ENCODE measurements at regions of chr15 and their contacts with region 1.

Region 1: DNA sequence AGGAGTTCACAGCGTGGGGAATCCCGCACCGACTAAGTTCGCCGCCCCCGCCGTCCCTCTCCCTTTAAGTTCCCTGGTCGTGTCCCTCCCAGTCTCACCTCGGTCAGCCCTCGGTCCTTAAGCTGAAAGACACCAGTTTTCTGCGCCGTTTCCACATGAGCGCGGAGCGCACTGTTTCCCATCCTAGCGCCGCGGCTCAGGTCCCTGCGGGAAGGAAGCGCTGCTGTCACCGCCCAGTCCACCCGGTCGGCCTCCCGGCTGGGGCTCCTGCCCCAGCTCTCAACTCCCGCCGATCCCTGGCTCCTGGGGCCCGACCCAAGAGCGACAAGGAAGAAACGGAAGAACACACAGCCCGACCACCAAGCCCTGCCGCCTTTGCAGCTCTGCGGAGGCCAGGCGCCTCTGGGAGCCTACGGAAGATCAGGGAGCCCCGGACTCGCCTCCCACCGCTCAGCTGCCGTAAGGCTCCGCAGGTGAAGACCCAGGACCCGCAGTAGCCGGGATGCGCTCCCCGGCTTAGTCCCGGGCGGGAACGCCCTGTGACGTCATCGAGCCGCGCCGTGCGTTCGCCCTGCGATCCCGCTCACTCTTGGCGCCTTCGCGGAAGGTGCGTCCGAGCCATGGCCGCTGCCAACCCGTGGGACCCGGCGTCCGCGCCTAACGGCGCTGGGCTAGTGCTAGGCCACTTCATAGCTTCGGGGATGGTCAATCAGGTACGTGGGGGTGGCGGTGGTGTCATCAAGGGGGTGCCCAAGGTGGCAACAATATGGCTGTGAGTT is at the starts of genes HAUS2 and LRRC57:
- DNase-seq: peak; percentile 89
- H3K4me3 Mint-ChIP-seq: peak within 1 kb of the TSS; percentile 90
- H3K27ac Mint-ChIP-seq: peak within 1 kb of the TSS; percentile 87
- H3K4me1 Mint-ChIP-seq: peaks cover 60% of the 10 kb centered on the region
- H3K27me3 Mint-ChIP-seq: no peaks in the 10 kb centered on the region
- total RNA-seq, gene HAUS2: 35.1 to 35.8 TPM
- total RNA-seq, gene LRRC57: 21.2 to 23.5 TPM

Region 2: GRCh38 chr15:42495361-42496212 is 52.9 kb before region 1 on chr15 and contains the start of gene SNAP23:
- CTCF ChIA-PET with region 1: interaction called, 5 read pairs
- POLR2A ChIA-PET with region 1: interaction called, 36 read pairs
- DNase-seq: peak; percentile 87
- H3K4me3 Mint-ChIP-seq: peak within 1 kb of the TSS; percentile 98
- H3K27ac Mint-ChIP-seq: peak within 1 kb of the TSS; percentile 84
- H3K4me1 Mint-ChIP-seq: peaks cover 64% of the 10 kb centered on the region
- H3K27me3 Mint-ChIP-seq: no peaks in the 10 kb centered on the region
- total RNA-seq, gene SNAP23: 46.0 to 49.1 TPM

Region 3: DNA sequence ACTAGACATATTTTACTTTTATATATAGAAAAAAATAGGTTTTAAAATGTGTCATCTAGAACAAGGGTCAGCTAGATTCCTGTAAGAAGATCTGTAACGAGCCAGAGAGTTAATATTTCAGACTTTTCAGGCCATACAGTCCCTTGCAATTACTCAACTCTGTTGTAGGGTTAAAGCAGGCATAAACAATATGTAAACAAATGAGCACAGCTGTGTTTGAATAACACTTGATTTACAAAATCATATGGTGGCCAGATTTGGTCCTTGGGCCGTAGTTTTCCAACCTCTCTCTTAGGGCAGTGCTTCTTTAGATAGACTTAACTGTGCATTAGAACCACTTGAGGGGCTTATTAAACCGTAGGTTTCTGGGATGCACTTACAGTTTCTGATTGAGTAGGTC is 19.5 kb before region 1 on chr15:
- CTCF ChIA-PET with region 1: interaction called, 3 read pairs
- POLR2A ChIA-PET with region 1: interaction called, 27 read pairs
- DNase-seq: no peak
- H3K4me3 Mint-ChIP-seq: no peak overlapping the region
- H3K27ac Mint-ChIP-seq: no peak overlapping the region
- H3K4me1 Mint-ChIP-seq: peaks cover 2% of the 10 kb centered on the region
- H3K27me3 Mint-ChIP-seq: no peaks in the 10 kb centered on the region

Region 4: GRCh38 chr15:42558739-42559138 is 10.3 kb after region 1 on chr15:
- CTCF ChIA-PET with region 1: interaction called, 6 read pairs
- POLR2A ChIA-PET with region 1: interaction called, 13 read pairs
- DNase-seq: no peak
- H3K4me3 Mint-ChIP-seq: no peak overlapping the region
- H3K27ac Mint-ChIP-seq: no peak overlapping the region
- H3K4me1 Mint-ChIP-seq: peaks cover 8% of the 10 kb centered on the region
- H3K27me3 Mint-ChIP-seq: no peaks in the 10 kb centered on the region

Region 5: GRCh38 chr15:42575188-42576039 is 27.0 kb after region 1 on chr15 and contains the start of gene STARD9:
- CTCF ChIA-PET with region 1: interaction called, 3 read pairs
- POLR2A ChIA-PET with region 1: interaction called, 44 read pairs
- DNase-seq: peak; percentile 96
- H3K4me3 Mint-ChIP-seq: peak within 1 kb of the TSS; percentile 90
- H3K27ac Mint-ChIP-seq: peak within 1 kb of the TSS; percentile 69
- H3K4me1 Mint-ChIP-seq: peaks cover 29% of the 10 kb centered on the region
- H3K27me3 Mint-ChIP-seq: peaks cover 24% of the 10 kb centered on the region
- total RNA-seq, gene STARD9: 8.2 TPM

Region 6: DNA sequence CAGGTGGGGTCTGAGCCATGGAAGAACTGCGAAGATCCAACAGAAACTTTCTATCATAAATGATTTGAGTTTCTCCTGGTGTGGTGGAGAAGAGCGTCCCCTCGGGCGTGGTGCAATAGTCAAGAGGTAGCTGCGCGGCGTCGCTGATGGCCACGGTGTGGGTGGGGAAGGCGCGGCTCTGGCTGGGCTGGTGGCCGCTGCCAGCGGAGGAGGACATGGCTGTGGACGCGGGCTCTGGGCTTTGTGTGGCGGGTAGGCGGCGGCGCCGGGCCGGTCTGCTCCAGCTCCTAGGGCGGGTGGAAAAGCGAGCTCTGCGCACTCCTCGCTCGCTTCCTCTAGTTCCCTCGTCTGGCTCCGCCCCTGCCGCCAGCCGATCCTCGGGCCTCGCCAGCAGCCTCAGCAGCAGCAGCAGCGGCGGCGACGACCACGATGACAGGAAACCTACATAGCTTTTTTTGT is 32.9 kb after region 1 on chr15:
- CTCF ChIA-PET with region 1: interaction called, 13 read pairs
- POLR2A ChIA-PET with region 1: interaction called, 44 read pairs
- DNase-seq: peak; percentile 86
- H3K4me3 Mint-ChIP-seq: peak overlapping the region; percentile 76
- H3K27ac Mint-ChIP-seq: peak overlapping the region; percentile 52
- H3K4me1 Mint-ChIP-seq: peaks cover 38% of the 10 kb centered on the region
- H3K27me3 Mint-ChIP-seq: peaks cover 26% of the 10 kb centered on the region

Region 7: GRCh38 chr15:42608110-42608531 is 59.7 kb after region 1 on chr15:
- CTCF ChIA-PET with region 1: no interaction called
- POLR2A ChIA-PET with region 1: interaction called, 15 read pairs
- DNase-seq: peak; percentile 87
- H3K4me3 Mint-ChIP-seq: peak overlapping the region; percentile 25
- H3K27ac Mint-ChIP-seq: peak overlapping the region; percentile 69
- H3K4me1 Mint-ChIP-seq: peaks cover 54% of the 10 kb centered on the region
- H3K27me3 Mint-ChIP-seq: no peaks in the 10 kb centered on the region

Measured in activated CD4-positive, alpha-beta memory T cell treated with anti-CD3 and anti-CD28 coated beads, Interleukin-2, amount 10 ng/mL, durations not matched to agents 7 days and 5 days (primary cell).